Activated CD8-positive, alpha-beta memory T cell treated with anti-CD3 and anti-CD28 coated beads, Interleukin-2, amount 10 ng/mL, durations not matched to agents 7 days and 5 days (primary cell): ENCODE measurements at regions of chr18 and their contacts with region 1.

Region 1: DNA sequence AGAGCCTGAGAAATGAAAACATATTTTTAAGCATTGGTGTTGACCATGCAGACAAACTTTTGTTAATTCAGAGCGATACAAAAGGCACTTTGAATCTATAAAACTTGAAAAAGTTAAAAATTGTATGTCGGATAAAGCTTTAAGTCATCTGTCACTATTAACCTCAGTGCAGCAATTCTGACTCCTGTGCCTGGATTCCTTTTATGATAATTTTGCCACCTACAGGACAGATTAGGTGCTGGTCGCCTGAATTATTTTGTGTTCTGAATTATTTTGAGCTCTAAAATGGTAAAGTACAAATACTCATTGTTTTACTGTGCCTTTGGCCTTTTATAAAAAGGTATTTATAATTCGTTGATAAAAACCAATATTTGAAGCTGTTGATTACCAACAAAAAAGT is 19.4 kb upstream of the RNF138 start:
- DNase-seq: no peak
- ATAC-seq: peak; percentile 65
- H3K4me3 Mint-ChIP-seq: no peak overlapping the region
- H3K27ac Mint-ChIP-seq: no peak overlapping the region
- H3K4me1 Mint-ChIP-seq: peaks cover 26% of the 10 kb centered on the region
- H3K27me3 Mint-ChIP-seq: no peaks in the 10 kb centered on the region

Region 2: GRCh38 chr18:31942999-31943865 is 129.1 kb before region 1 on chr18 and contains the start of gene TRAPPC8:
- CTCF ChIA-PET with region 1: interaction called, 15 read pairs
- DNase-seq: peak; percentile 96
- ATAC-seq: peak; percentile 90
- H3K4me3 Mint-ChIP-seq: peak within 1 kb of the TSS; percentile 100
- H3K27ac Mint-ChIP-seq: peak within 1 kb of the TSS; percentile 100
- H3K4me1 Mint-ChIP-seq: peaks cover 41% of the 10 kb centered on the region
- H3K27me3 Mint-ChIP-seq: no peaks in the 10 kb centered on the region
- total RNA-seq, gene TRAPPC8: 33.0 to 41.9 TPM

Region 3: GRCh38 chr18:32048507-32049091 is 23.7 kb before region 1 on chr18:
- CTCF ChIA-PET with region 1: interaction called, 19 read pairs
- DNase-seq: peak; percentile 47
- ATAC-seq: peak; percentile 43
- H3K4me3 Mint-ChIP-seq: peak overlapping the region; percentile 18
- H3K27ac Mint-ChIP-seq: peak overlapping the region; percentile 87
- H3K4me1 Mint-ChIP-seq: peaks cover 54% of the 10 kb centered on the region
- H3K27me3 Mint-ChIP-seq: no peaks in the 10 kb centered on the region

Region 4: GRCh38 chr18:32060026-32060425 is 12.3 kb before region 1 on chr18:
- CTCF ChIA-PET with region 1: interaction called, 10 read pairs
- DNase-seq: no peak
- ATAC-seq: peak; percentile 49
- H3K4me3 Mint-ChIP-seq: no peak overlapping the region
- H3K27ac Mint-ChIP-seq: peak overlapping the region; percentile 12
- H3K4me1 Mint-ChIP-seq: peaks cover 48% of the 10 kb centered on the region
- H3K27me3 Mint-ChIP-seq: no peaks in the 10 kb centered on the region

Region 5: DNA sequence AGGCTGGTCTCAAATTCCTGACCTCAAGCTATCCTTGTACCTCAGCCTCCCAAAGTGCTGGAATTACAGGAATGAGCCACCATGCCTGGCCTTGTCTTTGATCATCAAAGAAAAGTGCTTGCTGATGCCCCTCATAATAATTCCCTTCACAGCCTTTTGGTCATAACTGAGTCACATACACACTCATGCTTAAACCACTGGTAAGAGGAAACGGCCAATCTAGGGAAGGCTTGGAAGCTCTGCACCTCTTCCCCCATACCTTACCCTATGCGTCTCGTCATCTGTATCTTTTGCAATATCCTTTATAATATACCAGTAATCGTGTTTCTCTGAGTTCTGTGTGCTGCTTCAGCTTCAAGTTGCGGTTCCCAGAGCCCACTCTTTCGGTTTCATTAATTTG is 14.5 kb after region 1 on chr18:
- CTCF ChIA-PET with region 1: interaction called, 24 read pairs
- DNase-seq: no peak
- ATAC-seq: no peak
- H3K4me3 Mint-ChIP-seq: no peak overlapping the region
- H3K27ac Mint-ChIP-seq: no peak overlapping the region
- H3K4me1 Mint-ChIP-seq: peaks cover 39% of the 10 kb centered on the region
- H3K27me3 Mint-ChIP-seq: peaks cover 3% of the 10 kb centered on the region